ENCODE measurements at regions of chr7 and their contacts with region 1.

Region 1: DNA sequence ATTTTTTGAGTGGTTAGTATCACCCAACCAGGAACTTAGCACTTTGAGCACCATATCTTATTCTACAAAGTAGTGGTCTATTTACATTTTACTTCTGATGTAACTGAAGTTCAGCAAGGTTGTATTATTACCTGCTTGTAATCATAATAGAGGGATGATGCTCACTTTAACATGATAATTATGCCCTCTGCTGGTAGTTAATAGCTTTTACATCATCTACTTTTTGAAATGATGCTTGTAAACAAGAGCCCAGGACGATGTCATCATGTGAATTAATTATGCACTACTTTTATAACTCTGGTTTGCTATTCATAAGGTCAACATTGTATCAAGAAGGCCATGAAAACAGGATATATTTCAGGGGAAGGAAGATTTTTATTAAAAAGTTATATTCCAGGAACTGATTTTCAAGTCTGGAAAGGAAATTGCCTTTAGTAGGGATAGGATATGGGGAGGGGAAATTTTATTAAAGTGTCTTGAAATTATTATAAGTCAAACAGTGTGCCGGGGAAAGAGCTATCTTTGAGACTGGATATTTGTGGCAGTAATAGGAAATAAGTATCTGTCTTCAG is 80.3 kb upstream of the SCIN start:
- DNase-seq: peak in 4 of 5 donors; percentile 13 to 39 (median 31)
- H3K4me3 ChIP-seq: no peak overlapping the region
- H3K4me3 Mint-ChIP-seq: no peak overlapping the region
- H3K27ac ChIP-seq: no peak overlapping the region
- H3K27ac Mint-ChIP-seq: no peak overlapping the region
- H3K4me1 ChIP-seq: no peaks in the 10 kb centered on the region
- H3K4me1 Mint-ChIP-seq: peaks cover 0 to 2% (median under 1%) of the 10 kb centered on the region in 4 donors
- H3K27me3 ChIP-seq: no peaks in the 10 kb centered on the region
- H3K27me3 Mint-ChIP-seq: peaks cover 2 to 5% of the 10 kb centered on the region in 2 donors

Region 2: DNA sequence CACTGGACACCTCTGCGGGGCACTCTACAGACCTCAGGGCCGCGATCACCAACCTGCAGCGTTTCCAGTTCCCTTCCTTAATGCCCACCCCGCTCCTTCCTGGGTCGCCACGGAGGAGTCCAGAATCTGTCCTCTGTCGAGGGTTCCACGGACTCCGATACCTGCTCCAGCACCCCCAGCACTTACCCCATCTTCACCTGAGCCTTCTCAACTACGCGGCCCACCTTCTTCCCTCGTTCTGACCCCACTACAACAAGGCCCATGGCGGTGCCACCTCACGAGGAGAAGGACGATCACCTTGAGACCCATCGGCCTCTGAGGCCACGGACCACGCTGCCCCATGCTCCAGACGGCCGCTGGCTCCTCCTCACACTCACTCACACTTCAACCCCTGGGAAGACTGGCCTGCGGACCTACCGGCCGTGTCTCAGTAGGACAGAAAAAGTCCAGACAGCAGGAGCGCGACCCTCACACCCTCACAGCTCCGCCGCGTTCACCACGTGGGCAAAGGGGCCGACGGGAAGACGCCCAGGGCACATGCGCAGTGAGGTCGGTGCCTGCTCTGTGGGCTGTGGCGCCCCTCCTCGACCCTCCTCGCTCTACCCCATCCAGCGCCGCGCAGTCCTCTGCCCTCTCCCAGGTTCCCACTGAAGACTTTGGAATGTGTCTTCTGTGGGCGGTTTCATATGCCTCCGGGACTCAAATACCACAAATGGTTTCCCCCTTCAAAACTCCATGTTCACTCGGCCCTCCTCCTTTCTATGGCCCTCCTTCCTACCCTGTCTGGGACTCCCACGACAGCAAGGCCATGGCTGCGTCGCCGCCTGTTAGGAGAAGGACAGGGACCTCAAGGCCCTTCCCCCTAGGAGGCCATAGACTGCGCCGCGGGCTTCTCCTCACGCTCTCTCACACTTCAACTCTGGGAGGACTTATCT is 1710.5 kb before region 1 on chr7:
- CTCF ChIA-PET with region 1: no interaction called
- POLR2A ChIA-PET with region 1: no interaction called
- intact Hi-C with region 1: no loop called
- DNase-seq: peak in 1 of 5 donors; percentile 29
- H3K4me3 ChIP-seq: no peak overlapping the region
- H3K4me3 Mint-ChIP-seq: no peak overlapping the region
- H3K27ac ChIP-seq: no peak overlapping the region
- H3K27ac Mint-ChIP-seq: no peak overlapping the region
- H3K4me1 ChIP-seq: no peaks in the 10 kb centered on the region
- H3K4me1 Mint-ChIP-seq: no peaks in the 10 kb centered on the region
- H3K27me3 ChIP-seq: no peaks in the 10 kb centered on the region
- H3K27me3 Mint-ChIP-seq: no peaks in the 10 kb centered on the region

Region 3: GRCh38 chr7:11373546-11374142 is 1116.6 kb before region 1 on chr7:
- CTCF ChIA-PET with region 1: no interaction called
- POLR2A ChIA-PET with region 1: no interaction called
- intact Hi-C with region 1: loop called (anchors 5 kb)
- DNase-seq: no peak
- H3K4me3 ChIP-seq: no peak overlapping the region
- H3K4me3 Mint-ChIP-seq: no peak overlapping the region
- H3K27ac ChIP-seq: no peak overlapping the region
- H3K27ac Mint-ChIP-seq: no peak overlapping the region
- H3K4me1 ChIP-seq: no peaks in the 10 kb centered on the region
- H3K4me1 Mint-ChIP-seq: no peaks in the 10 kb centered on the region
- H3K27me3 ChIP-seq: no peaks in the 10 kb centered on the region
- H3K27me3 Mint-ChIP-seq: peaks cover 0 to 1% of the 10 kb centered on the region in 2 donors

Region 4: DNA sequence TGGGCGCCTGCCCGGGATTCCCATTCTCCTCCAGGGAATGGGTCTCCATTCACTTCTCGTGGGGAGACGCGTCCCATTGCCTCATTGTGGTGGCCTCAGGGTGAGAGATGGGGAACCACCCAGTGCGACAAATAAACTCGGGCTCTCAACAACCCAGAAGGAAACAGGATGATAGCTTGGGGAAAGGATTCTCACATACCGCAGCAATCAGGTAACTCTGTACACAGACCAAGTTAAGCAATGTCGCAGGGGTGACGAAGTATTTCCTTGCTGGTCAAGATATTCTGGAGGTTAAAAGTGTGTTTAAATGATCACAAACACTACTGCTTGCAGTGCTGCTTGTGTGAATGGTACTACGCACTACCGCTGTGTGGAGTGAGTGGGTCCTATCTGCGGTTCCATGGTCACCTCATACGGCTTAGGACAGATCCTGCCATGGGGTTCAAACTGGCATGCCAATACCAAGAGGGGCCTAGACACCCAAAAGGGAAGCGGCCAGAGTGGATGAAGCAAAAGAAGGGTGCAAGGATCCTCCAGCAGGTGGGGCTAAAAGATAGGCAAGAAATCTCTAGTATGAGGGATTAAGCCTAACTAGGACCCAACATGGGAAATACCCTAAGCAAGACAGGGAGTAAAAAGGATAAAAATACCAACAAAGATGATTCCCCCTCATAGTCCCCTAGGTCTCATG is 422.9 kb before region 1 on chr7:
- CTCF ChIA-PET with region 1: interaction called, 6 read pairs
- POLR2A ChIA-PET with region 1: no interaction called
- intact Hi-C with region 1: loop called (anchors 1 kb)
- DNase-seq: peak; percentile 58 to 66 (median 63)
- H3K4me3 ChIP-seq: no peak overlapping the region
- H3K4me3 Mint-ChIP-seq: no peak overlapping the region
- H3K27ac ChIP-seq: no peak overlapping the region
- H3K27ac Mint-ChIP-seq: peak overlapping the region in 1 of 7 donors; percentile 2
- H3K4me1 ChIP-seq: no peaks in the 10 kb centered on the region
- H3K4me1 Mint-ChIP-seq: peaks cover 0 to 5% (median 3%) of the 10 kb centered on the region in 4 donors
- H3K27me3 ChIP-seq: no peaks in the 10 kb centered on the region
- H3K27me3 Mint-ChIP-seq: no peaks in the 10 kb centered on the region

Region 5: GRCh38 chr7:12434009-12434642 is 56.1 kb before region 1 on chr7:
- CTCF ChIA-PET with region 1: interaction called, 3 read pairs
- POLR2A ChIA-PET with region 1: no interaction called
- intact Hi-C with region 1: loop called (anchors 1 kb)
- DNase-seq: no peak
- H3K4me3 ChIP-seq: no peak overlapping the region
- H3K4me3 Mint-ChIP-seq: no peak overlapping the region
- H3K27ac ChIP-seq: no peak overlapping the region
- H3K27ac Mint-ChIP-seq: no peak overlapping the region
- H3K4me1 ChIP-seq: no peaks in the 10 kb centered on the region
- H3K4me1 Mint-ChIP-seq: no peaks in the 10 kb centered on the region
- H3K27me3 ChIP-seq: no peaks in the 10 kb centered on the region
- H3K27me3 Mint-ChIP-seq: peaks cover 3 to 9% of the 10 kb centered on the region in 2 donors

Region 6: GRCh38 chr7:12475362-12476063 is 14.7 kb before region 1 on chr7:
- CTCF ChIA-PET with region 1: interaction called, 10 read pairs
- POLR2A ChIA-PET with region 1: no interaction called
- intact Hi-C with region 1: no loop called
- DNase-seq: no peak
- H3K4me3 ChIP-seq: no peak overlapping the region
- H3K4me3 Mint-ChIP-seq: no peak overlapping the region
- H3K27ac ChIP-seq: no peak overlapping the region
- H3K27ac Mint-ChIP-seq: no peak overlapping the region
- H3K4me1 ChIP-seq: no peaks in the 10 kb centered on the region
- H3K4me1 Mint-ChIP-seq: no peaks in the 10 kb centered on the region
- H3K27me3 ChIP-seq: no peaks in the 10 kb centered on the region
- H3K27me3 Mint-ChIP-seq: no peaks in the 10 kb centered on the region

Region 7: DNA sequence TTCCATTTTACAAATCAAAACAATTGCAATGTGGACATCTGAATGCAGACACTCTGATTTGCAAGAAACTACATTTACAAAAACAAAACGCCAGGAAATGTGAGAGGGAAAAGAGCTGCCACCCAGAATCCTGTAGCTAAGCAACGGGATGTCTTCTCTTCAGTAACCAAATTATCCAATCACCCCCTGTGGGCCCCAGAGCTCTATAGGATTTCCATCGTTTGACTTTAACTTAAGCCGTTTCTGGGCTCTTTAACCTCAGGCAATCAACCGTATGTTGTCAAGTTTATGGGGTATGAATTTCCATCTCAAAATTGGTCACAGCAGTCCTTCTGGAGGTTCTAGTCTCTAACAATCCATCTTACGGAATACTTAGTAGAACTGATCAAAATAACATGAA is 1258.8 kb after region 1 on chr7:
- CTCF ChIA-PET with region 1: no interaction called
- POLR2A ChIA-PET with region 1: no interaction called
- intact Hi-C with region 1: no loop called
- DNase-seq: no peak
- H3K4me3 ChIP-seq: no peak overlapping the region
- H3K4me3 Mint-ChIP-seq: no peak overlapping the region
- H3K27ac ChIP-seq: no peak overlapping the region
- H3K27ac Mint-ChIP-seq: no peak overlapping the region
- H3K4me1 ChIP-seq: no peaks in the 10 kb centered on the region
- H3K4me1 Mint-ChIP-seq: peaks cover 0 to 1% (median 0%) of the 10 kb centered on the region in 4 donors
- H3K27me3 ChIP-seq: no peaks in the 10 kb centered on the region
- H3K27me3 Mint-ChIP-seq: peaks cover 0 to 3% of the 10 kb centered on the region in 2 donors